Activated T-helper 1 cell treated with anti-CD3 and anti-CD28 coated beads, Interleukin-12 subunit alpha, Interleukin-12 subunit beta, Interleukin-2, Interleukin-4 antibody, amounts not matched to agents 30 ng/mL and 10 ng/mL and 1 ng/mL, durations not matched to agents 14 hours and 24 hours and 36 hours (primary cell): ENCODE measurements at regions of chr1 and their contacts with region 1.

Region 1: GRCh38 chr1:160726498-160727315 is 12.3 kb upstream of the SLAMF7 start:
- DNase-seq: no peak
- H3K4me3 Mint-ChIP-seq: no peak overlapping the region
- H3K27ac Mint-ChIP-seq: no peak overlapping the region
- H3K4me1 Mint-ChIP-seq: peaks cover 18% of the 10 kb centered on the region
- H3K27me3 Mint-ChIP-seq: no peaks in the 10 kb centered on the region

Region 2: GRCh38 chr1:160739098-160739511 is 12.4 kb after region 1 on chr1 and contains the start of gene SLAMF7:
- intact Hi-C with region 1: loop called (anchors 1 kb)
- DNase-seq: no peak
- H3K4me3 Mint-ChIP-seq: peak within 1 kb of the TSS; percentile 90
- H3K27ac Mint-ChIP-seq: peak within 1 kb of the TSS; percentile 95
- H3K4me1 Mint-ChIP-seq: peaks cover 68% of the 10 kb centered on the region
- H3K27me3 Mint-ChIP-seq: no peaks in the 10 kb centered on the region
- total RNA-seq, gene SLAMF7: 43.7 and 53.6 TPM in 2 replicates

Region 3: DNA sequence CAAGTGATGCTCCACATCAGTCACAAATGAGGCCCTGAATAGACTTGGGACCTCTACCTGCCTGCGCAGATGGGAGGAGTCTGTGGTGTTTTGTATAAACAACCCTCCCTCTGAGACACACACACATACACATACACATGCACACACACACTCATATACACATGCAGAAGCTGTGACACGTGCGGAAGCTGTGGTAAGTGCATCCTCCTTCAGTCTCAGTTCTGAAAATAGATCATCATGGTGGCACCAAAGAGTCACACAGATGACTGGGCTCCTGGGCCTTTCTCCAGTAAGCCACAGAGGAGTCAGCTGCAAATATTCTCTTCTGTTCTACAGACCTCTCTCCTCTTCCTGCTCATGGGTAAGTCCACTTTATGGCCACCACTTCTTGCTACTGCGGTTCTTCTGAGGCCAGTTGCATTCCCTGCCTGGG is 69.3 kb after region 1 on chr1 and contains the start of gene LY9:
- intact Hi-C with region 1: loop called (anchors 2 kb)
- DNase-seq: peak; percentile 76
- H3K4me3 Mint-ChIP-seq: peak within 1 kb of the TSS; percentile 73
- H3K27ac Mint-ChIP-seq: peak within 1 kb of the TSS; percentile 77
- H3K4me1 Mint-ChIP-seq: peaks cover 67% of the 10 kb centered on the region
- H3K27me3 Mint-ChIP-seq: peaks cover 14% of the 10 kb centered on the region
- total RNA-seq, gene LY9: 0.49 and 0.71 TPM in 2 replicates

Region 4: GRCh38 chr1:160837558-160838205 is 111.0 kb after region 1 on chr1:
- intact Hi-C with region 1: loop called (anchors 1 kb)
- DNase-seq: peak; percentile 79
- H3K4me3 Mint-ChIP-seq: peak overlapping the region; percentile 47
- H3K27ac Mint-ChIP-seq: peak overlapping the region; percentile 94
- H3K4me1 Mint-ChIP-seq: peaks cover 61% of the 10 kb centered on the region
- H3K27me3 Mint-ChIP-seq: no peaks in the 10 kb centered on the region

Region 5: GRCh38 chr1:160884579-160884978 is 157.9 kb after region 1 on chr1:
- intact Hi-C with region 1: loop called (anchors 1 kb)
- DNase-seq: no peak
- H3K4me3 Mint-ChIP-seq: no peak overlapping the region
- H3K27ac Mint-ChIP-seq: no peak overlapping the region
- H3K4me1 Mint-ChIP-seq: peaks cover 7% of the 10 kb centered on the region
- H3K27me3 Mint-ChIP-seq: peaks cover 11% of the 10 kb centered on the region